ENCODE measurements at regions of chr11 and their contacts with region 1.

Region 1: GRCh38 chr11:102341844-102342318 is 5.1 kb upstream of the BIRC2 start:
- DNase-seq: peak; percentile 78
- H3K4me3 Mint-ChIP-seq: no peak overlapping the region
- H3K27ac Mint-ChIP-seq: peak overlapping the region; percentile 19
- H3K4me1 Mint-ChIP-seq: peaks cover 52% of the 10 kb centered on the region
- H3K27me3 Mint-ChIP-seq: no peaks in the 10 kb centered on the region

Region 2: GRCh38 chr11:102097186-102097585 is 244.7 kb before region 1 on chr11:
- CTCF ChIA-PET with region 1: no interaction called
- POLR2A ChIA-PET with region 1: no interaction called
- intact Hi-C with region 1: no loop called
- DNase-seq: no peak
- H3K4me3 Mint-ChIP-seq: no peak overlapping the region
- H3K27ac Mint-ChIP-seq: no peak overlapping the region
- H3K4me1 Mint-ChIP-seq: no peaks in the 10 kb centered on the region
- H3K27me3 Mint-ChIP-seq: no peaks in the 10 kb centered on the region

Region 3: DNA sequence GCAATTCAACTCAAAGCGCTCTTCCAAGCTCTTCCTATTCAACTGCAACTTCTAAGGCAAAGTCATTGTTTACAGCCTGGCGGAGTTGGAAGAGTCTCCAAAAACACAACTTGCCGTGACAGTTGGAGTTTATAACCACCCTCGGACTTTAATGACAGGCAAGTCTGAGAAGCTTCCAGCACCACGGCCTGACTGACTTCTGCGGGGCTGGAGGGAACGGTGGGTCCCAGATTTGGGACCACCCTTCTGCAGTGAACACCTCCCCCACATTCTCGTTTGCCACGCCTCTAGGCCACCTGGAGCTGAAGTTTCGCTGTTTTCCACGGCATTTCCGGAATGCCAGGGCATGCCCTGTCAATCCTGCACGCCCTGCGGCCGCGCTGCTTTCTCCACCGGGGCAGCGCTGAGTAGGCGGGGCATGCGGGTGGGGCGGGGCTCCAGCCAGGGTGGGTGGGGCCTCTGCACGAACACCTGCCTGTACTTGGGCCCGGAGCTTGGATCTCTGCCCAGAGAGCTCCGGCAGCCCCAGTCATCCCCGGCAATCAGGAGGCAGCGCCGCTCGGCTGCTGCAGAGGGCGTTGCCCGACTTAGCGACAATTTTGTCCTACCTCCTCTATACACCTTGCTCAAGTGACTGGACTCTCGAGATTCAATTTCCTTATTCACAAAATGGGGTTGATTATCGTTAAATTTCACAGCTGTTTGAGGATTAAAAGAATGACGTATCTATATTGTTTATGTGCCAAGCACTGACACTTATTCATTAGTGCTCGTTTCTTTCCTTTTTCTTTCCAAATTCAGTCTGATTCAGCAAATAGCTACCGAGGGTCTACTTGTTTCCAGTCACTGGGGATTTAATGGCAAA is 73.3 kb before region 1 on chr11:
- CTCF ChIA-PET with region 1: interaction called, 10 read pairs
- POLR2A ChIA-PET with region 1: no interaction called
- intact Hi-C with region 1: no loop called
- DNase-seq: peak; percentile 92
- H3K4me3 Mint-ChIP-seq: peak overlapping the region; percentile 24
- H3K27ac Mint-ChIP-seq: no peak overlapping the region
- H3K4me1 Mint-ChIP-seq: peaks cover 31% of the 10 kb centered on the region
- H3K27me3 Mint-ChIP-seq: no peaks in the 10 kb centered on the region

Region 4: DNA sequence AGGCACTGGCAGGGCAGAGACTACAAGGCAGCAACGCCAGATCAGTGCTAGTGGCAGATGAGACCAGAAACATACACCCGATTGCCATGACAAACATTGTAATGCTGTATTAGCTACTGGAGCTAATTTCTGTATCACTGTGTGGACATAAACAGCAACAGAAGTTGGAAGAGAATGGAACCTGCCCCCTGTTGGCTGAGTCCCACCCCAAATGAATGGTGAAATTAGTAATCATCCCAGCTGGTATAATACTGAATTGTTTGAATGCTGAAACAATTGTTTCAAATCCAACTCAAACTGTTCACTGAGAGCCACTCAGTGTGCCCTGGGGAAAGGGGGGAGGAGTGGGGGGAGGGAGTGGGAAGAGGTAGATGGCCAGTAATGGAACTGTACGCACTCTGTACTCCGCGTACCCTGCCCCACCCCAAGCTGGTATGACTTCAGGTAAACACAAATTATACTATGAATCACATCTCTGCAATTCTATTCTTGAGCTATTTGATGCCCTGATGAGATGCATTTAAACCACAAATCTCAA is 35.8 kb before region 1 on chr11:
- CTCF ChIA-PET with region 1: interaction called, 22 read pairs
- POLR2A ChIA-PET with region 1: no interaction called
- intact Hi-C with region 1: no loop called
- DNase-seq: peak; percentile 52
- H3K4me3 Mint-ChIP-seq: peak overlapping the region; percentile 59
- H3K27ac Mint-ChIP-seq: peak overlapping the region; percentile 85
- H3K4me1 Mint-ChIP-seq: peaks cover 69% of the 10 kb centered on the region
- H3K27me3 Mint-ChIP-seq: no peaks in the 10 kb centered on the region

Region 5: GRCh38 chr11:102323542-102324251 is 18.2 kb before region 1 on chr11:
- CTCF ChIA-PET with region 1: interaction called, 52 read pairs
- POLR2A ChIA-PET with region 1: no interaction called
- intact Hi-C with region 1: no loop called
- DNase-seq: no peak
- H3K4me3 Mint-ChIP-seq: no peak overlapping the region
- H3K27ac Mint-ChIP-seq: peak overlapping the region; percentile 72
- H3K4me1 Mint-ChIP-seq: peaks cover 51% of the 10 kb centered on the region
- H3K27me3 Mint-ChIP-seq: no peaks in the 10 kb centered on the region

Region 6: GRCh38 chr11:102476812-102477211 is 134.9 kb after region 1 on chr11:
- CTCF ChIA-PET with region 1: interaction called, 10 read pairs
- POLR2A ChIA-PET with region 1: no interaction called
- intact Hi-C with region 1: no loop called
- DNase-seq: peak; percentile 58
- H3K4me3 Mint-ChIP-seq: peak overlapping the region; percentile 3
- H3K27ac Mint-ChIP-seq: peak overlapping the region; percentile 77
- H3K4me1 Mint-ChIP-seq: peaks cover 52% of the 10 kb centered on the region
- H3K27me3 Mint-ChIP-seq: no peaks in the 10 kb centered on the region

Region 7: GRCh38 chr11:102495161-102496042 is 153.5 kb after region 1 on chr11:
- CTCF ChIA-PET with region 1: interaction called, 66 read pairs
- POLR2A ChIA-PET with region 1: no interaction called
- intact Hi-C with region 1: loop called (anchors 1 kb)
- DNase-seq: peak; percentile 22
- H3K4me3 Mint-ChIP-seq: no peak overlapping the region
- H3K27ac Mint-ChIP-seq: no peak overlapping the region
- H3K4me1 Mint-ChIP-seq: peaks cover 18% of the 10 kb centered on the region
- H3K27me3 Mint-ChIP-seq: peaks cover 7% of the 10 kb centered on the region

Region 8: DNA sequence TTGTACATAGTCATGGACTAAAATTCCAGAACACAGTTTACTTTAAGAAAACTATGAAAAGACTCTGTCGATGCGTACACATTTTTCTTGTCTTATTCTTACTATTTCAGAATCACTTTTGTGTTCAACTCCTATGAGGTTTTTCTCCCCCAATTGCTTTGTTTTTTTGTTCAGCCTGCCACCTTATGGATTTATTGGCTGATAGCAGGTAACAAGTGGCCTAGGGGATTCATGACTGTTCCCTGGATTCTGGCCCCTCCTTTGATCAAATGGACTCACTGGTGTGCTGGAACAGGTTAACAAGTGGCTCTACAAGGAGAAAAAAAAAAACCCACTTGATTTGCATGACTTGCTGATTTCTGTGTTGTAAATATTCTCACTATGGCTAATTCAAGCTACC is 272.6 kb after region 1 on chr11:
- CTCF ChIA-PET with region 1: interaction called, 92 read pairs
- POLR2A ChIA-PET with region 1: interaction called, 3 read pairs
- intact Hi-C with region 1: loop called (anchors 1 kb)
- DNase-seq: no peak
- H3K4me3 Mint-ChIP-seq: no peak overlapping the region
- H3K27ac Mint-ChIP-seq: no peak overlapping the region
- H3K4me1 Mint-ChIP-seq: peaks cover 10% of the 10 kb centered on the region
- H3K27me3 Mint-ChIP-seq: no peaks in the 10 kb centered on the region